Heart right ventricle (tissue), 16 donors: ENCODE measurements at regions of chr6 and their contacts with region 1.

Region 1: GRCh38 chr6:35202066-35202546 is 11.7 kb upstream of the SCUBE3 start:
- DNase-seq: peak; percentile 25 to 29
- ATAC-seq: peak in 7 of 8 donors; percentile 64 to 81 (median 73)
- H3K4me3 ChIP-seq: no peak overlapping the region
- H3K27ac ChIP-seq: peak overlapping the region in 4 of 10 donors; percentile 9 to 51 (median 28)
- H3K4me1 ChIP-seq: peaks cover 0 to 24% (median 14%) of the 10 kb centered on the region in 9 donors
- H3K27me3 ChIP-seq: peaks cover 0 to 10% (median 0%) of the 10 kb centered on the region in 7 donors
- CTCF ChIP-seq: no peak

Region 2: DNA sequence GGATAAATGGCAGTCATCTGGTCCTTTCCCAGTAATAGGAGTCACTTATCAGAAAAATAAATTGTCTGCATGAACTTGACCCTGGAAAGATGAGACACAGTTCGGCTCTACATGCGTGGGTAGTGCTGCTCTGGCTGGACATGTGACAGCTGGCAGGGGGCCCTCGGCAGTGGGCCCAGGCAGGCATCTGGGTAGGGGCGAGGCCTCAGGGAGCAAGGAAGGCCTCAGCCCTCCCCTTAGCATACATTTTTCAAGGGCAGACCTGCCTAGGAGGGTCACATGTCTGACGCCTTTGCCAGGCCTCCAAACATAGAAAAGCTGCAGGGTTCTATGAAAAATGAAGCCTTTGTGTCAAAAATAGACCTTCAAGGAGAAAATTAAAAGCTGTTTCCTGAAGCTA is 492.7 kb before region 1 on chr6:
- intact Hi-C with region 1: no loop called
- DNase-seq: peak; percentile 79 to 81
- ATAC-seq: peak; percentile 95 to 99 (median 98)
- H3K4me3 ChIP-seq: no peak overlapping the region
- H3K27ac ChIP-seq: peak overlapping the region; percentile 0 to 77 (median 60)
- H3K4me1 ChIP-seq: peaks cover 0 to 27% (median 13%) of the 10 kb centered on the region in 9 donors
- H3K27me3 ChIP-seq: no peaks in the 10 kb centered on the region
- CTCF ChIP-seq: no peak

Region 3: GRCh38 chr6:34867484-34867883 is 334.6 kb before region 1 on chr6:
- intact Hi-C with region 1: no loop called
- DNase-seq: no peak
- ATAC-seq: peak in 7 of 8 donors; percentile 26 to 66 (median 48)
- H3K4me3 ChIP-seq: no peak overlapping the region
- H3K27ac ChIP-seq: peak overlapping the region in 7 of 10 donors; percentile 13 to 76 (median 48)
- H3K4me1 ChIP-seq: peaks cover 0 to 35% (median 19%) of the 10 kb centered on the region in 9 donors
- H3K27me3 ChIP-seq: no peaks in the 10 kb centered on the region
- CTCF ChIP-seq: peak in 7 of 9 donors; percentile 11 to 51 (median 33)

Region 4: GRCh38 chr6:35139908-35140655 is 62.0 kb before region 1 on chr6:
- intact Hi-C with region 1: loop called in 6 of 10 experiments (anchors 5 to 10 kb)
- DNase-seq: peak in 1 of 2 donors; percentile 55
- ATAC-seq: peak in 6 of 8 donors; percentile 38 to 76 (median 63)
- H3K4me3 ChIP-seq: no peak overlapping the region
- H3K27ac ChIP-seq: no peak overlapping the region
- H3K4me1 ChIP-seq: peaks cover 0 to 26% (median 10%) of the 10 kb centered on the region in 9 donors
- H3K27me3 ChIP-seq: peaks cover 0 to 15% (median 0%) of the 10 kb centered on the region in 7 donors
- CTCF ChIP-seq: peak; percentile 63 to 92 (median 85)

Region 5: DNA sequence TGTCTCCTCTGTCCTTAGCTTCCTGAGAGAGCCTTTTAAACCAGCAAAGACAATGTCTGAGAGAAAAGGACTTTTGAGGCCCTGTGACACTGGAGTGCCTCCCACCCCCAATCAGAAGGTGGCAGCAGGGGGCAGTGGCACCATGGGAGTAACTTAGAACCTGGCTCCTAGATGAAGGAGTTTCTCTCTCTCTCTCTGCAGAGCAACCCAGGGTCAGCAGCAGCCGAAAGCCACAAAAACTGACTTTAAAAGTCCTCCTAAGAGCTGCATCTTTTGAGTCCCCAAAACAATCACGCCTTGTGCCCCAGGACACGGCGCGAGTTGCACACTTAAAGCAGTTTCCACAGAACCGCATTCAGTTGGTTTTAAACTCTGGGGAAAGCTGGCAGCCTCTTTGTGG is 55.7 kb before region 1 on chr6:
- intact Hi-C with region 1: loop called (anchors 1 to 10 kb)
- DNase-seq: peak; percentile 37 to 40
- ATAC-seq: peak; percentile 67 to 90 (median 86)
- H3K4me3 ChIP-seq: no peak overlapping the region
- H3K27ac ChIP-seq: no peak overlapping the region
- H3K4me1 ChIP-seq: peaks cover 0 to 11% (median under 1%) of the 10 kb centered on the region in 9 donors
- H3K27me3 ChIP-seq: peaks cover 0 to 1% (median 0%) of the 10 kb centered on the region in 7 donors
- CTCF ChIP-seq: peak; percentile 42 to 72 (median 63)

Region 6: GRCh38 chr6:35161776-35162607 is 40.1 kb before region 1 on chr6:
- intact Hi-C with region 1: loop called in 1 of 10 experiments (anchors 5 kb)
- DNase-seq: peak in 1 of 2 donors; percentile 20
- ATAC-seq: peak in 5 of 8 donors; percentile 45 to 58 (median 50)
- H3K4me3 ChIP-seq: no peak overlapping the region
- H3K27ac ChIP-seq: no peak overlapping the region
- H3K4me1 ChIP-seq: peaks cover 0 to 20% (median 11%) of the 10 kb centered on the region in 9 donors
- H3K27me3 ChIP-seq: peaks cover 0 to 3% (median 0%) of the 10 kb centered on the region in 7 donors
- CTCF ChIP-seq: no peak

Region 7: GRCh38 chr6:35262596-35262995 is 60.5 kb after region 1 on chr6:
- intact Hi-C with region 1: no loop called
- DNase-seq: no peak
- ATAC-seq: no peak
- H3K4me3 ChIP-seq: no peak overlapping the region
- H3K27ac ChIP-seq: peak overlapping the region in 6 of 10 donors; percentile 19 to 100 (median 64)
- H3K4me1 ChIP-seq: peaks cover 7 to 79% (median 37%) of the 10 kb centered on the region in 9 donors
- H3K27me3 ChIP-seq: no peaks in the 10 kb centered on the region
- CTCF ChIP-seq: no peak